Activated CD4-positive, alpha-beta T cell treated with anti-CD3 and anti-CD28 coated beads, Interleukin-2, amount 10 ng/mL, durations not matched to agents 24 days and 14 days (primary cell): ENCODE measurements at regions of chr11 and their contacts with region 1.

Region 1: DNA sequence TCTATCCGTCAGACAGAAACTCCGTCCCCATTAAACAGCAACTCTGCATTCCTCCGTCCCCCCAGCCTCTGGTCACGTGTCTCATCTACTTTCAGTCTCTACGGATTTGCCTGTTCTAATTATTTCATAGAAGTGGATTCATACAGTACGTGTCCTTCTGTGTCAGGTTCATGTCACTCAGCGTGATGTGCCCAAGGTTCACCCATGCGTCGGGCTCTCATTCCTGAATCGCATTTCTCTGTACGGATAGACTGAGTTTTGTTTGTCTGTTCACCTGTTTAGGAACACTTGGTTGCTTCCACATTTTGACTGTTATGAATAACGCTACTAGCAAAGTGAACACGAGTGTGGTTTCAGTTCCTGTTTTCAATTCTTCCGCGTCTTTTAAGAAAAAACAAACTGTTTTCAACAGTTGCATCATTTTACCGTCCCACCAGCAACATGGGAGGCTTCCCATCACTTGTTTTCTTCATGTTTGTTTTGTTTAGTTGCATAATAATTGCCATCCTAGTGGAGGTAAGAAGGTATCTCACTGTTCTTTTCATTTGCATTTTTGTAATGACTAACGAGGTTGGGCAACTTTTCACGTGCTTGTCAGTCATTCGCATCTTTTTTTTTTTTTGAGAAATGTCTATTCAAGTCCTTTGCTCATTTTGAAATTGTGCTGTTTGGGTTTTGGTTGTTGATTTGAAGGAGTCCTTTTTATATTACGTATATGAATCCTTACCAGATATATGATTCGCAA is 8.9 kb upstream of the NLRP6 start:
- DNase-seq: peak; percentile 87
- H3K4me3 Mint-ChIP-seq: peak overlapping the region; percentile 91
- H3K27ac Mint-ChIP-seq: peak overlapping the region; percentile 97
- H3K4me1 Mint-ChIP-seq: peaks cover 38% of the 10 kb centered on the region
- H3K27me3 Mint-ChIP-seq: peaks cover 7% of the 10 kb centered on the region

Region 2: DNA sequence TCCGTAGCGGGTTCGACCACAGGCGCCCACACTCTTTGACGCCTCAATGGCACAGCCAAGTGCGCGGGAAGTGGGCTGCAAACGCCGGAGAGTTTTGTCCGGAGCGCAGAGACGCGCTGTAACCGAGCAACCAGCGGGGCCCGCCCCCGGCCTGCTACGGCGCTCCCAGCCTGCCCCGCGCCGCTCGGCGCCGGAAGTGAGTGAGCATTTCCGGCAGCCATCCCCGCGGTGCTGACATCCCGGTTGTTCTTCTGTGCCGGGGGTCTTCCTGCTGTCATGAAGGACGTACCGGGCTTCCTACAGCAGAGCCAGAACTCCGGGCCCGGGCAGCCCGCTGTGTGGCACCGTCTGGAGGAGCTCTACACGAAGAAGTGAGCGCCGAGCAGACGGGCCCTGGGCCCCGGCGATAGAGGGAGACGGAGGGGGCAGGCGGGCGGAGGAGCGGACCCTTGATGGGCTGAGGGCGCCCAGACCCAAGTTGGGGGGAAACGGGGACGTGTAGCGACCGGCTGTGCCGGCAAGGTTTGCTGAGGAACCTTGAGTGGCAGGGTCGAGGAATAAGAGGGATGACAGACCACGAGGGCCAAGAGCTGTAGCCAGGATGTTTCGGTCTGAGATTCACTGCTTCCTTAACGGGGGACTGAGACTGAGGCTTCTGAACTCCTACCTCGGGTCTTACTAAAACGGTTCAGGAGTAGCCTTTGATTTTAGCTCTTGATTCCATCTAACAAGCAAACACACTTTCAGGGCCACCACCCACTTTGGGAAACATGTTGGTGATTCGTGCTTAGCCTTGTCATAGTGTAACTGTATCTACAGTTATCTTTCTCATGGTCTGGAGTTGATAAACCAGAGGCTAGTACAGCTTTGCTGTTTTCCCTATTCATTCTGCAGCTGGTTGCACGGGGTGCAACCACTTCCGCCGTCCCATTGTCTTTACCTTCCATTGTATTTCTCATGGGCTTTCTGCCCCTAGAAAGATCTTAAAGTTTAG is 32.2 kb before region 1 on chr11 and contains the start of gene PSMD13:
- intact Hi-C with region 1: loop called (anchors 1 kb)
- DNase-seq: peak; percentile 97
- H3K4me3 Mint-ChIP-seq: peak within 1 kb of the TSS; percentile 97
- H3K27ac Mint-ChIP-seq: peak within 1 kb of the TSS; percentile 100
- H3K4me1 Mint-ChIP-seq: peaks cover 46% of the 10 kb centered on the region
- H3K27me3 Mint-ChIP-seq: no peaks in the 10 kb centered on the region
- total RNA-seq, gene PSMD13: 272 and 275 TPM in 2 replicates

Region 3: DNA sequence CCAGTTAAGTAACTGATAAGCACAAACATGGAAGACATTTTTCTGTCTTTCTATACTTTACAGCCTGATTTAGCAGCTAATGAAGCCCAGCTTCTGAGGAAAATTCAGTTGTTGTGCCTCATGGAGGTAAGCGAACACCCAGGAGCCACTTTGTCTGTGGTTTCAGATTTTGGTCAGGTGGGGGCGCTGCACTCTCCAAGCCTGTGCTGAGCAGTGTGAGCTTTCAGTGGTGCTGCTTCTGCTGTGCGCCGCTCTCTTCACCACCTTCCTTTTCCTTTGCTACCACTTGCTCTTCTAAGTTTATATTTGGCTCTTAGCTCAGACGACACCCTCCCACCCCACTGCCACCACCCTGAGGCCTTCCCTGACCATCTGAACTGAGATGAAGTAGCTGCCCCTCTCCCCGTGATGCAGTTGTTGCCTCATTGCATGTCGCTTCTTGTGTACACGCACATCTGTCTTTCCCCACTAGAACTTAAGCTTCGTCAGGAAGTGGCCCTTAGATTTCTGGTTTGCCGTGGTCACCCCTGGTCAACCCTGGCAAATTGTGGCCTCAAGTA is 18.5 kb before region 1 on chr11:
- intact Hi-C with region 1: loop called (anchors 1 kb)
- DNase-seq: peak; percentile 94
- H3K4me3 Mint-ChIP-seq: no peak overlapping the region
- H3K27ac Mint-ChIP-seq: peak overlapping the region; percentile 42
- H3K4me1 Mint-ChIP-seq: peaks cover 21% of the 10 kb centered on the region
- H3K27me3 Mint-ChIP-seq: no peaks in the 10 kb centered on the region

Region 4: DNA sequence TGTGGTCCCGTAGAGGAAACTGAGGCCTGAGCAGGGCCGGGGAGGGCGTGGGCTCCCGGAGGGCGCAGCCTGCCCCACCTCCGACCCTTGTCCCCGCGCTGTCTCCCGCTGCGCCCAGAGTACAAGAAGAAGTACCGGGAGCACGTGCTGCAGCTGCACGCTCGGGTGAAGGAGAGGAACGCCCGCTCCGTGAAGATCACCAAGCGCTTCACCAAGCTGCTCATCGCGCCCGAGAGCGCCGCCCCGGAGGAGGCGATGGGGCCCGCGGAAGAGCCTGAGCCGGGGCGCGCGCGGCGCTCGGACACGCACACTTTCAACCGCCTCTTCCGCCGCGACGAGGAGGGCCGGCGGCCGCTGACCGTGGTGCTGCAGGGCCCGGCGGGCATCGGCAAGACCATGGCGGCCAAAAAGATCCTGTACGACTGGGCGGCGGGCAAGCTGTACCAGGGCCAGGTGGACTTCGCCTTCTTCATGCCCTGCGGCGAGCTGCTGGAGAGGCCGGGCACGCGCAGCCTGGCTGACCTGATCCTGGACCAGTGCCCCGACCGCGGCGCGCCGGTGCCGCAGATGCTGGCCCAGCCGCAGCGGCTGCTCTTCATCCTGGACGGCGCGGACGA is 10.8 kb after region 1 on chr11:
- intact Hi-C with region 1: loop called (anchors 1 kb)
- DNase-seq: peak; percentile 87
- H3K4me3 Mint-ChIP-seq: peak overlapping the region; percentile 87
- H3K27ac Mint-ChIP-seq: peak overlapping the region; percentile 84
- H3K4me1 Mint-ChIP-seq: peaks cover 39% of the 10 kb centered on the region
- H3K27me3 Mint-ChIP-seq: peaks cover 40% of the 10 kb centered on the region

Region 5: GRCh38 chr11:288328-289144 is 19.2 kb after region 1 on chr11 and contains the start of gene PGGHG:
- intact Hi-C with region 1: loop called (anchors 1 kb)
- DNase-seq: peak; percentile 92
- H3K4me3 Mint-ChIP-seq: peak within 1 kb of the TSS; percentile 98
- H3K27ac Mint-ChIP-seq: peak within 1 kb of the TSS; percentile 97
- H3K4me1 Mint-ChIP-seq: peaks cover 30% of the 10 kb centered on the region
- H3K27me3 Mint-ChIP-seq: peaks cover 9% of the 10 kb centered on the region
- total RNA-seq, gene PGGHG: 136 and 142 TPM in 2 replicates

Region 6: DNA sequence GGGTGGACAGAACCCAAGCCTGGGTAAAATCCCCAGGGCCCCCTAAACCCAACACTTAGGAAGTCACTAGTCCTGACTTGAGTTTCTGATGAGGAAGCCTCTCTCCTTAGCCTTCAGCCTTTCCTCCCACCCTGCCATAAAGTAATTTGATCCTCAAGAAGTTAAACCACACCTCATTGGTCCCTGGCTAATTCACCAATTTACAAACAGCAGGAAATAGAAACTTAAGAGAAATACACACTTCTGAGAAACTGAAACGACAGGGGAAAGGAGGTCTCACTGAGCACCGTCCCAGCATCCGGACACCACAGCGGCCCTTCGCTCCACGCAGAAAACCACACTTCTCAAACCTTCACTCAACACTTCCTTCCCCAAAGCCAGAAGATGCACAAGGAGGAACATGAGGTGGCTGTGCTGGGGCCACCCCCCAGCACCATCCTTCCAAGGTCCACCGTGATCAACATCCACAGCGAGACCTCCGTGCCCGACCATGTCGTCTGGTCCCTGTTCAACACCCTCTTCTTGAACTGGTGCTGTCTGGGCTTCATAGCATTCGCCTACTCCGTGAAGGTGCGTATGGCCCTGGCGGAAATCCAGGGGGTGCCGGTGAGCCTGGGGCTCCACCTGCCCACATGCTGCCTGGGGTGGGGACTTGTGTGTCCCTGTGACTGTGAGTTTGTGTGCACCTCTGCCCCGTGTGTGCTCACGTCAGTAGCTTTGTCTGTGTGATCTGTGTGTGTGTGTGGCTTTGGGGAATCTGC is 44.6 kb after region 1 on chr11 and contains the start of gene IFITM1:
- intact Hi-C with region 1: loop called (anchors 1 kb)
- DNase-seq: peak; percentile 93
- H3K4me3 Mint-ChIP-seq: peak within 1 kb of the TSS; percentile 96
- H3K27ac Mint-ChIP-seq: peak within 1 kb of the TSS; percentile 98
- H3K4me1 Mint-ChIP-seq: peaks cover 36% of the 10 kb centered on the region
- H3K27me3 Mint-ChIP-seq: no peaks in the 10 kb centered on the region
- total RNA-seq, gene IFITM1: 241 and 256 TPM in 2 replicates

Region 7: GRCh38 chr11:355581-356458 is 86.5 kb after region 1 on chr11:
- intact Hi-C with region 1: loop called (anchors 5 kb)
- DNase-seq: peak; percentile 97
- H3K4me3 Mint-ChIP-seq: peak overlapping the region; percentile 89
- H3K27ac Mint-ChIP-seq: peak overlapping the region; percentile 95
- H3K4me1 Mint-ChIP-seq: peaks cover 26% of the 10 kb centered on the region
- H3K27me3 Mint-ChIP-seq: peaks cover 5% of the 10 kb centered on the region